Esophagus muscularis mucosa (tissue), 4 donors: ENCODE measurements at regions of chr6 and their contacts with region 1.

Region 1: GRCh38 chr6:79536954-79537747 is at the start of gene LCA5:
- DNase-seq: peak; percentile 97
- H3K4me3 ChIP-seq: peak within 1 kb of the TSS; percentile 66 to 88 (median 78)
- H3K27ac ChIP-seq: peak within 1 kb of the TSS; percentile 90 to 95 (median 93)
- H3K4me1 ChIP-seq: peaks cover 8 to 36% (median 19%) of the 10 kb centered on the region in 4 donors
- H3K27me3 ChIP-seq: no peaks in the 10 kb centered on the region
- CTCF ChIP-seq: no peak
- EP300 ChIP-seq: no peak
- POLR2A ChIP-seq: no peak
- total RNA-seq, gene LCA5: 5.2 to 11.5 (median 8.5) TPM

Region 2: DNA sequence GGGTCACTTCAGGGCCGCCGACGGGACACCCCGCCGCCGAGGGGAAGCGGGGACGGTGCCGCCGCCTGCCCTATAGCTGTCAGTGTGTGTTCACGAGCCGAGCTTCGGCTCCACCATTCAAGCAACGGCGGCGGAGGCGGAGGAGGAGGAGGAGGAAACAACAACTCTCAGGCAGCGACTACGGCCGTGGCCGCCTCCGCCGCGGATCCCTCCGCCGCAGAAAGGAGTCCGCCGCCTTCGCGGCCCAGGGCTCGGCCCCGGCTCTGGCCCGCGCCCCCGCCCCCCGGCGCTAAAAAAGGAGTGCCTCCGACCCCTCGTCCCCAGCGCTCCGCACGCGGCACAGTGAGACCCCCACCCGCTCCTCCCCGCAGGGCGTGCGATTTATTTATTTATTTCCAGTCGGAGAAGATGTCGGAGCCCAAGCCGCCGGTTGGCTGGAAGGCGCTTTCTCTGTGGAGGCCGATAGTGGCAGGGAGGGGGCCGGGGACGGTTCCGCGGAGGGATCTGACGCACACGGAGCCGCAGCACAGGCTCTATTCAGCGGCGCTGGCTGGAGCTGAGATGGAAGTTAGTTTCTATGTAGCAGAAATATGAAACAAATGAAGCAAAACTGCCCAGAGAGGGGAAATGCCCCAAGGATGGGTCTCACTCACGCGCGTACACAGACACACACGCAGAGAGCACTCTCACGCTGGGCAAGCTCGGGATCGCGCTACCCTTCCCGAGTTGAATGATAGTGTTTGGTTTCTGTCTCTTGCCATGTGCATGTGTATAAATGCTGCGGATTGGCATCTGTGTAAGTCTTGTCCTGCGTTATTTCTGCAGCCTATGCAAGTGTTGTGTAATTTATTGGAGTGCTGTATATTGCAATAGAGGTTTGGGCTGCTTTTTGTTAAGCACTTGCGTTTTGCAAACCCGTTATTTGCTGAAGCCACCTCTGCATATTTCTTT is 458.8 kb before region 1 on chr6 and contains the start of gene PHIP:
- intact Hi-C with region 1: loop called (anchors 5 kb)
- DNase-seq: peak; percentile 98
- H3K4me3 ChIP-seq: peak within 1 kb of the TSS; percentile 84 to 98 (median 94)
- H3K27ac ChIP-seq: peak within 1 kb of the TSS; percentile 96 to 100 (median 98)
- H3K4me1 ChIP-seq: peaks cover 28 to 43% (median 40%) of the 10 kb centered on the region in 4 donors
- H3K27me3 ChIP-seq: no peaks in the 10 kb centered on the region
- CTCF ChIP-seq: no peak
- EP300 ChIP-seq: no peak
- POLR2A ChIP-seq: peak; percentile 24
- total RNA-seq, gene PHIP: 20.1 to 32.4 (median 25.5) TPM

Region 3: DNA sequence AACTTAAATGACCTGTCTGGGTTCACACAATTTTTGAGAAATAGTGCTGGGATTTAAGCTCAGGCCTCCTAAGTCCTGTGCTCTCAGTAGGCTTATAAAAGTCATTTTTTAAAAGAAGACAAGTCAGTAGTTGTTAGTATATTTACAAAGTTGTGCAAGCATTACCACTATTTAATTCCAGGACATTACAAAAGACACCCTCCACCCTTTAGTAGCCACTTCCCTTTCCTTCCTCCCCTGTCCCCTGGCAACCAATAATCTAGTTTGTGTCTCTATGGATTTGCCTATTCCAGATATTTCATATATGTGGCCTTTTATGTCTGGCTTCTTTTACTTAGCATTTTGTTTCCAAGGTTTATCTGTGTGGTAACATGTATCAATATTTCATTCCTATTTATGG is 340.2 kb before region 1 on chr6:
- intact Hi-C with region 1: no loop called
- DNase-seq: no peak
- H3K4me3 ChIP-seq: no peak overlapping the region
- H3K27ac ChIP-seq: no peak overlapping the region
- H3K4me1 ChIP-seq: peaks cover 0 to 8% (median 0%) of the 10 kb centered on the region in 4 donors
- H3K27me3 ChIP-seq: no peaks in the 10 kb centered on the region
- CTCF ChIP-seq: no peak
- EP300 ChIP-seq: no peak
- POLR2A ChIP-seq: no peak

Region 4: GRCh38 chr6:79600812-79601609 is 63.9 kb after region 1 on chr6:
- intact Hi-C with region 1: no loop called
- DNase-seq: no peak
- H3K4me3 ChIP-seq: no peak overlapping the region
- H3K27ac ChIP-seq: no peak overlapping the region
- H3K4me1 ChIP-seq: peaks cover 0 to 10% (median 0%) of the 10 kb centered on the region in 4 donors
- H3K27me3 ChIP-seq: no peaks in the 10 kb centered on the region
- CTCF ChIP-seq: no peak
- EP300 ChIP-seq: no peak
- POLR2A ChIP-seq: no peak